Activated CD4-positive, alpha-beta T cell treated with anti-CD3 and anti-CD28 coated beads, Interleukin-2, amount 10 ng/mL, durations not matched to agents 24 days and 14 days (primary cell): ENCODE measurements at regions of chr3 and their contacts with region 1.

Region 1: DNA sequence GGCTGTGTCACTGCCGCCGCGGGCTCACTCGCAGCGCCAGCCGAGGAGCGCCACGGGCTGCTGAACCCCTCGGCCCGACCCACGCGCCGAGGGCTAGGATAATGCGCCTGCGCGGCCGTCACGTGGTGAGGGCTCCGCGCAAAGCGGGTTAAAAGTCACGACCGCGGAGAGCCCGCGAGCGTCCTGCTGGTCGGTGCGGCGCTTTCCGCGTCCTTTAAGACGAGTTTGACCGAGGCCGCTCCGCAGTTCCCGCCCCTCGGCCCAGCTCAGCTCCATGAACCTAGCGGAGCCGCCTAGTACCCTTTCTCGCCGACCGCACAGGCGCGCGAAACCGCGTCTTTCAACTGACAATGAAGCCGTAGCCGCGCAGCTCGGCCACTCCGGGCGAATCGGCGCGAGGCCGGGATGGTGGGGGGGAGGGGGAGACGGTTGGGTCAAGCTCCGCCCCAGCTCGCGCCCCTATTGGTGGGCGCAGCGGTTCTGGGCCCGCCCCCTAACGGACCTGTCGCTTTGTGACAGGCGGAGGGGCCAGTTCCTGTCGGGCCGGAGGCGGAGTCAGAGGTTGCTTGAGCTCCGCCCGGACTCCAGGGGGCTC is 636 bp upstream of the STT3B start:
- DNase-seq: peak; percentile 100
- H3K4me3 Mint-ChIP-seq: peak overlapping the region; percentile 95
- H3K27ac Mint-ChIP-seq: peak overlapping the region; percentile 99
- H3K4me1 Mint-ChIP-seq: peaks cover 19% of the 10 kb centered on the region
- H3K27me3 Mint-ChIP-seq: no peaks in the 10 kb centered on the region

Region 2: GRCh38 chr3:30611613-30612436 is 920.3 kb before region 1 on chr3:
- intact Hi-C with region 1: loop called (anchors 5 kb)
- DNase-seq: peak; percentile 74
- H3K4me3 Mint-ChIP-seq: peak overlapping the region; percentile 90
- H3K27ac Mint-ChIP-seq: peak overlapping the region; percentile 86
- H3K4me1 Mint-ChIP-seq: peaks cover 67% of the 10 kb centered on the region
- H3K27me3 Mint-ChIP-seq: no peaks in the 10 kb centered on the region

Region 3: GRCh38 chr3:31105438-31106077 is 426.5 kb before region 1 on chr3:
- intact Hi-C with region 1: loop called (anchors 10 kb)
- DNase-seq: peak; percentile 66
- H3K4me3 Mint-ChIP-seq: no peak overlapping the region
- H3K27ac Mint-ChIP-seq: no peak overlapping the region
- H3K4me1 Mint-ChIP-seq: peaks cover 39% of the 10 kb centered on the region
- H3K27me3 Mint-ChIP-seq: no peaks in the 10 kb centered on the region

Region 4: DNA sequence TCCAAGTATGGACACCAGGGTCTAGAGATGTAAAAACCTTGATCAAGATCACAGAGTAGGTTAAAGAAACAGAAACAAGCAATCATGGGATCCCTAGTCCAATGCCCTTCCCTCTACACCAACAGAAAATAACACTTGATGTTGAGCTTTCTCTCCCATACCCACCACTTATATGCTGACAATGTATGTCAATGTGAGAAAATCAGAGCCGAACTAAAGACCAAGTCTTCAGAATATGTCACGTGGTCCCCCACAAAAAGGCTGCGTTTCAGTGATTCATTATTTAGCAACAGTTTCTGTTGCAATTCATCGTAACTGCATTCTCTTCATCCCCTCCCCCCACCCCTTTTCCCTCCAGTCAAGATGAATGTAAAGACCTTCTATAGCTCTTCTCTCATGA is 278.3 kb before region 1 on chr3:
- intact Hi-C with region 1: loop called (anchors 1 kb)
- DNase-seq: no peak
- H3K4me3 Mint-ChIP-seq: peak overlapping the region; percentile 61
- H3K27ac Mint-ChIP-seq: peak overlapping the region; percentile 93
- H3K4me1 Mint-ChIP-seq: peaks cover 51% of the 10 kb centered on the region
- H3K27me3 Mint-ChIP-seq: no peaks in the 10 kb centered on the region

Region 5: DNA sequence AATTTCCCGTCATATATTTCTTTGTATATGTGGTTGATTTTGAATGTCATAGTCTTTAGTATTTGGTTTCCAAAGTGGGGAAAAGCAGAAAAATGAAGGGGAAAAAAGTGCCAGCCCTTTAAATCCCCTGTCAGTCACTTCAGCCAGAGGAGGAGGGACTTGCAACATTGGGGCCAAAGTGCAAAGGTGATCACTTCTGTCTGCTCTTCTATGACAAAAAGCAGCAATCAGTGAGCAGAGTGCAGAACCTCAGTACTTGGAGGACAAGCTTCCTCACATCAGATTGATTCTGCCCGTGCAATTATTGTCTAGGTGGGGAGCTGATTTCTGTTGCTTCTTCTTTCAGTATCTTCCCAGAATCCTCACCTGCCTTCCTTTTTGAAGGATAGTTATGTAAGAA is 60.7 kb after region 1 on chr3:
- intact Hi-C with region 1: loop called (anchors 5 kb)
- DNase-seq: no peak
- H3K4me3 Mint-ChIP-seq: peak overlapping the region; percentile 0
- H3K27ac Mint-ChIP-seq: no peak overlapping the region
- H3K4me1 Mint-ChIP-seq: peaks cover 33% of the 10 kb centered on the region
- H3K27me3 Mint-ChIP-seq: no peaks in the 10 kb centered on the region

Region 6: DNA sequence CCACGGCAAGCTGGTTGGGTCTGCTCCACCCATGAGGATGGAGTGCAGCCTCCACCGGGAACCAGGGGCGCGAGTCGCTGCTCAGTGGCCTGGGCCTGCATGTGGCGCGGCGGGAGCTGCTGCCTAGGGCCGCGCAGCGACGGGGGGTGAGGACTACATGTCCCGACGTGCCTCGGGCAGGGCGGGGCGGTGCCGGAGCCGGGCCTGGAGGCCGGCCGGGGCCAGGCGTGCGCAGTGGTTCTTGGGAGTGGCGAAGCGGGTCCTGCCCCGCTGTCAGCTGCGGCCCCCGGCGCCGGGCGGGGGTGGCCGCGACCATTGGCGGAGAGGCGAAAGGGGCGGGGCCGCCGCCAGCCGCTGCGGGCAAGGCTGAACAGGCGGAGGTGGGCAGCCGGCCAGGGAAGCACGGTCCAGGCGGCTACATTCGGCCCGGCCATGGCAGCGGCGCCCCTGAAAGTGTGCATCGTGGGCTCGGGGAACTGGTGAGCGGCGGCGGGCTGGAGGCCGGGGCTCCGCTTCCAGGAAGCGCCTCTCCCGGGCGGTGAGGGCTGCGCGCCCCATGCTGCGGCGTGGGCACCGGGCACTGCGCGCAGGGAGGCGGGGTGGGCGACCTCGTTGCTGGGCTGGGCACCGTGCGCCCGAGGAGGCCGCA is 574.3 kb after region 1 on chr3 and contains the start of gene GPD1L:
- intact Hi-C with region 1: loop called (anchors 1 kb)
- DNase-seq: peak; percentile 98
- H3K4me3 Mint-ChIP-seq: peak within 1 kb of the TSS; percentile 94
- H3K27ac Mint-ChIP-seq: peak within 1 kb of the TSS; percentile 90
- H3K4me1 Mint-ChIP-seq: peaks cover 32% of the 10 kb centered on the region
- H3K27me3 Mint-ChIP-seq: no peaks in the 10 kb centered on the region
- total RNA-seq, gene GPD1L: 19.0 and 20.0 TPM in 2 replicates